Activated CD8-positive, alpha-beta memory T cell treated with anti-CD3 and anti-CD28 coated beads, Interleukin-2, amount 10 ng/mL, durations not matched to agents 7 days and 5 days (primary cell): ENCODE measurements at regions of chr11 and their contacts with region 1.

Region 1: GRCh38 chr11:122754553-122755322 is 83.6 kb upstream of the CRTAM start:
- DNase-seq: peak; percentile 69
- ATAC-seq: peak; percentile 49
- H3K4me3 Mint-ChIP-seq: no peak overlapping the region
- H3K27ac Mint-ChIP-seq: peak overlapping the region; percentile 74
- H3K4me1 Mint-ChIP-seq: peaks cover 64% of the 10 kb centered on the region
- H3K27me3 Mint-ChIP-seq: no peaks in the 10 kb centered on the region

Region 2: GRCh38 chr11:122101625-122102291 is 653.0 kb before region 1 on chr11:
- CTCF ChIA-PET with region 1: no interaction called
- DNase-seq: no peak
- ATAC-seq: no peak
- H3K4me3 Mint-ChIP-seq: no peak overlapping the region
- H3K27ac Mint-ChIP-seq: no peak overlapping the region
- H3K4me1 Mint-ChIP-seq: no peaks in the 10 kb centered on the region
- H3K27me3 Mint-ChIP-seq: peaks cover 28% of the 10 kb centered on the region

Region 3: GRCh38 chr11:122453586-122453985 is 301.2 kb before region 1 on chr11:
- CTCF ChIA-PET with region 1: no interaction called
- DNase-seq: no peak
- ATAC-seq: no peak
- H3K4me3 Mint-ChIP-seq: no peak overlapping the region
- H3K27ac Mint-ChIP-seq: no peak overlapping the region
- H3K4me1 Mint-ChIP-seq: no peaks in the 10 kb centered on the region
- H3K27me3 Mint-ChIP-seq: no peaks in the 10 kb centered on the region

Region 4: DNA sequence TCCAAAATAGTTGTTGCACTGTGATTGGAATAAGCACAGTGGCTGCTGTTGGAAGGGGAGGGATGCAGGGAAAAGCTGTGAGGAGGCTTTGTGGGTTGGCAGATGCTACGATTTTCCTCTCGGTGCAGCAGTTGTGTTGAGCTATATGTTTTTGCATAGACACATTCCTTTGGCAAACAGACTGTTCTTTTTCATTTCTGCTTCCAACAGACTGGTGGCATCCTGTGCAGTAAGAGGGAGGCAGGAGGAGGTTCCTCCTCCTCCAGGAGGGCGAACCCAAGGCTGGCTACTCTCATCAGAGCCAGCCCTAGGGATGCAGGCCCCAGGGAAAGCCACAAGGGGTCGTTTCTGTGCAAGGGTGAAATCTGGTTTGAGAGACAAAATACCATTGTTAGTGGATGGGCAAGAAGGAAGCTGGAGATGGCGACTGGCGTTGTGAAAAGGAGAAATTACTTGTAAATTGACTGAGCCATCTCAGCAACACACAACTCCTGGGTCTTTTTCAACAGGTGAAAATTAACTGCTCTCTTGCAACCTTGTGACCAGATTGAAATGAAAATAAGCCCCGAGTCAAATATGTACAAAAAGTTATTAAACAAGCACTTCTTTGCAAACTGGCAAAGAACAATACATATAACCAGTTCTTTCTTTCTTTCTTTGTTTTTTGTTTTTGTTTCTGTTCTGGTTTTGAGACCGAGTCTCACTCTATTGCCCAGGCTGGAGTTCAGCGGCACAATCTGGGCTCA is 125.8 kb before region 1 on chr11:
- CTCF ChIA-PET with region 1: interaction called, 153 read pairs
- DNase-seq: peak; percentile 81
- ATAC-seq: peak; percentile 88
- H3K4me3 Mint-ChIP-seq: no peak overlapping the region
- H3K27ac Mint-ChIP-seq: no peak overlapping the region
- H3K4me1 Mint-ChIP-seq: peaks cover 15% of the 10 kb centered on the region
- H3K27me3 Mint-ChIP-seq: peaks cover 7% of the 10 kb centered on the region

Region 5: DNA sequence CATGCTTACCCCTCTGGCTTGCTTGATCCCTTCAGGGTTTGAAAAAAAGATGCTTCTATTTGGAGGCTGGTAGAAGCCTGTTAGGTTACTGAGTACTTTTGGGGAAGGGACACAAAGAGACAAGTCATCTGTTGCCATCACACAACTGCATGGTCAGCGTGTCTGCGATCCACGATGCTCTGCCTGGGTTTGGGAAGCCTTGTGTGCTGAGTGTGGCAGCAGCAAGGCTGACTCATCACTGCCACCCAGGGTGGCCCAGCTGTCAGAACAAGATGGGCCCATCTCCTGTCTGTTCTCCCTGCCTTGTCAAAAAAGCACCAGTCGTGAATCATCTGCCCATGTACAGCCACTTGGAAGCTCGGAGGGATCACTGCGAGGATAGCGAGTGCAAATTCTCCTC is 73.0 kb before region 1 on chr11:
- CTCF ChIA-PET with region 1: interaction called, 65 read pairs
- DNase-seq: no peak
- ATAC-seq: no peak
- H3K4me3 Mint-ChIP-seq: no peak overlapping the region
- H3K27ac Mint-ChIP-seq: no peak overlapping the region
- H3K4me1 Mint-ChIP-seq: peaks cover 17% of the 10 kb centered on the region
- H3K27me3 Mint-ChIP-seq: no peaks in the 10 kb centered on the region

Region 6: DNA sequence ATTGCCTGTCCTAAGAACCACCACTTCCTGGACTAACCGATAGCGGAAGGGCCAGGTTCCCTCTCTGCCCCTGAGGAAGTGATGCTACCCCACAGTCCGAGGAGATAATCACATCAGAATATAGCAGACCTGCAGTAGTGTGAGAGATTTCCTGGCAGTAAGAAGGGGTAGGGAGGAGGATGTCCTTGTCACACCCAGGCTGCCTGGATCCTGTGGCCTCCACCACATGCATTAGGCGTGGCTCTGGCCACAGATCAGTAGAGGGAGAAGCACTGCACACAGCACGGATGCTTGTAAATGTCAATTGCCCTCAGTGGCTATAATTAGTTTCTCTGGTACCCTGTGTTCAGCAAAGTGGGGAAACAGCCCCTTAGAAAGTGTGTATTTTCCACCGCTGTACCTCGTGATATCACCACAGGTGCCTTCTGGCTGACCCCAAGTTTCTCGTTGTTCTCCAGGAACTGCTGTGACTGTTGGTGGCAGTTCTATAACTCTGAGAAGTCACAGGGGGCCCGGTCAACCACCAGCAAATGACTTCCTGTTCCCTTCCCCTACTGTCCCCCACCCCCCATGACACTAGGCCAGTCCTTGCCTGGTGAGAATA is 37.4 kb before region 1 on chr11:
- CTCF ChIA-PET with region 1: interaction called, 79 read pairs
- DNase-seq: peak; percentile 95
- ATAC-seq: peak; percentile 85
- H3K4me3 Mint-ChIP-seq: peak overlapping the region; percentile 54
- H3K27ac Mint-ChIP-seq: peak overlapping the region; percentile 92
- H3K4me1 Mint-ChIP-seq: peaks cover 89% of the 10 kb centered on the region
- H3K27me3 Mint-ChIP-seq: no peaks in the 10 kb centered on the region

Region 7: DNA sequence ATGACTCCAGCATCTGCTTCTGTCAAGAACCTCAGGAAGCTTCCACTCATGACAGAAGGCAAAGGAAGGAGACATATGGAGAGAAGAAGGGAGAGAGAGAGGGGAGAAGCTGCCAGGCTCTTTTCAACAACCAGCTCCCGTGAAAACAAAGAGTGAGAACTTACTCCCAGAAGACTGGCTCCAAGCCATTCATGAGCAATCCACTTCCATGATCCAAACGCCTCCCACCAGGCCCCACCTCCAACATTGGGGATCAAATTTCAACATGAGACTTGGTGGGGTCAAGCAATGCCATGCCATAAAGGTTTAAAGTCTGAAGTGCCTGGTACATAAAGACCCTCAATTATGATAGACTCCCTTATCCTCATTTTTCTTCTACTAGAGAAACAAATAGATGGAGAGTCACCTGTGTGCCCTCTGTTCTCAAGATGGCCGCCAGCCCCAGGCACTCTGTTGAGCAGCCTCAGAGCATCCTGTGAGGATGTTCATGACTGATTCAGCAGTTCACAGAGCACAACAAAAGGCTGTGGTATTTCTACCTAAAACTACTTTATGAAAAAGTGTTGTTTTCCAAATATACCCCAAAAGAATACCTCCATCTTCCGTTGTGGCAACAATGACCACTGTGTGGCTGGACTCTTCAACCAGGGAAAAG is 14.5 kb after region 1 on chr11:
- CTCF ChIA-PET with region 1: interaction called, 11 read pairs
- DNase-seq: no peak
- ATAC-seq: no peak
- H3K4me3 Mint-ChIP-seq: no peak overlapping the region
- H3K27ac Mint-ChIP-seq: no peak overlapping the region
- H3K4me1 Mint-ChIP-seq: peaks cover 2% of the 10 kb centered on the region
- H3K27me3 Mint-ChIP-seq: peaks cover 3% of the 10 kb centered on the region

Region 8: DNA sequence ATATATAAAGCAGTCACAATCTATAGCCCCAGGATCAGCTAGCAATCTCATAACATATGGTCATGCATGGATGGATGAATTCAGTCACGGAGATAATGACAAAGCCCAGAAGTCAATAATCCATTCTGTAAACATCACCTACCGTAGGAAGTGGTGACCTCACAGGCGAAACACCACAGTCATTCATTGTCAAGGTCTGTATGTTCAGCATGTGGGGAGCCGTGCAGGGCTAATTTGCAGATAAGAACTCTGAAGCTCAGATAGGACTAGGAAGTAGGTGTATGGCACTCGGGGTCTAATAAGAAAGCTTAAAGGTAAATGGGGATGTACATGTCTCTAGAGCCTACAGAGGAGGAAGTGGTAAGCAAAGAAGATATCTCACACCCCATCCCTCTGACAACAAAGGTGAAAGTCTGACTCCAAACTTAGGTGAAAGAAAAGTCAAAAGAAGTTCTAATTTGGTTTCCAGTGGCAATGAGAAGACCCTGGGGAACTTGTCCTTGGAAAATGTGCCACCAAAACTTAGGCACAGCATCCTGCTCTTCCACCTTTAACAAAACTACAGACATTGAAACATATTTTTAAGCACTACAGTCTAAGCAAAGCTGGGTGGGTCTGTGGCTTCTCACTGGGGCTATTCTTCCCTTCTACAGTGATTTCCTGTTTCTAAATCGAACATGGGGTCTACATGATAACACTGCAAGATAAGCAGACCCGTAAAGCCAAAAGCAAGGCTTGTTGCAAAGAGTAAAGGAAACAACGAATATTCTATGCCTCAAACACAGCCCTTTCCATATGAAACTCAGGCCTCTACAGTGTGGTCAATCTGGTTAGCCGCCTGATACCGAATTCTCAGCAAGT is 88.8 kb after region 1 on chr11:
- CTCF ChIA-PET with region 1: interaction called, 10 read pairs
- DNase-seq: peak; percentile 88
- ATAC-seq: peak; percentile 77
- H3K4me3 Mint-ChIP-seq: peak overlapping the region; percentile 62
- H3K27ac Mint-ChIP-seq: peak overlapping the region; percentile 97
- H3K4me1 Mint-ChIP-seq: peaks cover 79% of the 10 kb centered on the region
- H3K27me3 Mint-ChIP-seq: no peaks in the 10 kb centered on the region

Region 9: DNA sequence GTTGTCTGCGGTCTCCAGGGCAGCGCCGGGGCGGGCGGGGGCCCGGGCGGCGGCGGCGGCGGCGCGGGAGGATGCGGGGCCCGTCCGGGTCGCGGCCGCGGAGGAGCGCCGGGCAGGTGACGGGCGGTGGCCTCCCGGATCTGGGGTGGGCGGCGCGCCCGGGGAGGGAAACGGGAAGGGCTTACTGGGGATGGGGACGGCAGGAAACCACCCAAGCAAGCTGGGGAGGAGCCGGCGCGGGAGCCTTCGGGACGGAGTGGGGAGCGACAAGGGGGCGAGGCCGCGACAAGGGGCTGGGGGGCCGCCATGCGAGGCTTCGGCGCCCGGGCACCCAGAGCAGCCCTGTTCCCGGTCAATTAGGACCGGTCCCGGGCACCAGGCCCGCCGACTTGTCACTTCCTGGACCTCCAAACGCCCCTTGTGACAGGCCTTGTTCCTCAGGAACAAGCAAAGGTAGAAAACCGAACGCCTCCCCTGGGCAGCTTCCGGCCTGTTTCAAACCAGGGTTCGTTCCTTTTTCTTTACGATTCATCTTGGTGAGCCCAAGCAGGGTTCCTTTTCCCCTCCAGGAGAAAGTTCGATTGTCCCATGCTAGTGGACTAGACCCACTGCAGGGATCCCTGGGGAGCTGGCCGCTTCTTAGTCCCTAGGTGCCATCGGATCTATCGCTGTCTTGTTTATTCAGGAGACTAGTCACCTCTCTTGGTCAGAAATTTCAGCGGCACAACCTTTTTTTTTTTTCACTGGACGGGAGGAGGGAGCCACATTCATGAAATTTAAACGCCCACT is 128.3 kb after region 1 on chr11:
- CTCF ChIA-PET with region 1: no interaction called
- DNase-seq: peak; percentile 72
- ATAC-seq: peak; percentile 78
- H3K4me3 Mint-ChIP-seq: peak overlapping the region; percentile 80
- H3K27ac Mint-ChIP-seq: peak overlapping the region; percentile 82
- H3K4me1 Mint-ChIP-seq: peaks cover 28% of the 10 kb centered on the region
- H3K27me3 Mint-ChIP-seq: peaks cover 15% of the 10 kb centered on the region

Region 10: DNA sequence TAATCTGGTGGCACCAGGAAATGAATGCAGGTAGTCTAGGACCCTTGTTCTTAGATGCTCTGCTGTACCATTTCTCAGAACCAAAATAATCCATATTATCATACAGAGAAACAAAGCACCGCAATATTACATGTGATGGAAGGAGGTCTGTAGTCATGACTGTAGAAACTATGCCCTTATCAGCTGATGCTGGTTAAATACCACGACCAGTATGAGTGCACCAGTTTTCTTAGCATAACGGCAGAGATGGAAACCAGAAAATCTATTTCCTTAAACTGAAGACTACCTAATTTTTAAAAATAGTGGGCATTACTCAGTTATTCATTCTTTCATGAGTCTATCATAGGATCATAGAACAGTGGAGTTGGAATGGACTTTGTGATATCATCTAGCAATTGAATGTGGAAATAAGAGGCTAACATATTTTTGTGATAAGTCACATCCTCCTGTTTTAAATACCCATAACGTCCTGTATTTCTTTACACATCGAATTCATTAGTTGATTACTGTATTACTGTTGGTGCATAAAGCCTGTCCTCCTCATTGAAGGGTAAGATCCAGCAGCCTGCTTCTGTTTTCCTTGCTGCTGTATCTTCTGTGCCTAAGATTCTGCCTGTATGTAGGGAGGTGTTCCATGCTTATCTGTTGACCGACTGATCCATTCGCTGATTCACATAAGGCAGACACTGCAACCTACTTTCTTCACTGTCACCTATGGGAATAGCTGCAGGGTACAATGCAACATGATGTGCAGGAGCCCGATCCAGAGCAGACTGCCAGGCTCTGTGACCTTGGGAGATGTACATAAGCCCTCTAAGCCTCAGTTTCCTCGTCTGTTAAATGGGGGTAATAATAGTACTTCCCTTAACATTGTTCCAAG is 143.1 kb after region 1 on chr11:
- CTCF ChIA-PET with region 1: no interaction called
- DNase-seq: no peak
- ATAC-seq: no peak
- H3K4me3 Mint-ChIP-seq: no peak overlapping the region
- H3K27ac Mint-ChIP-seq: no peak overlapping the region
- H3K4me1 Mint-ChIP-seq: peaks cover 24% of the 10 kb centered on the region
- H3K27me3 Mint-ChIP-seq: no peaks in the 10 kb centered on the region